ENCODE measurements at regions of chr6 and their contacts with region 1.

Region 1: DNA sequence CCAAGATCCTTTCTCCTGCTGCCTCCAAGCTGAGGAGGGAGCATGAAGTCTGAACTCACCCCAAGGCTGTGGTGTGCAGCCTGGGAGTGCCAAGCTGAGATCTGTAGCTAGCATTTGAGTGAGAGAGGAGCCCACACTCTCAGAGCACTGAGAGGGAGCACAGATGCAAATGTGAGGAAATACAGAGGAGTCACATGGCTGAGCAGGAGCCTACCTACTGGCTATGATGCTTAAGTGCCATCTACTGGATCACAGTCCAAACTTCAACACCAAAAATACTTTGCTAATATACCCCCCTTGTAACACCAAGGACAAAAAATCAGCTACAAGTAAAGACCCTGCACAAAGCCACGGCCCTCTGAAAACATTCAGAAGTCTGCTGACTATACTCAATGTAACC is 94.4 kb upstream of the IMPG1 start:
- DNase-seq: no peak
- ATAC-seq: no peak
- H3K4me3 Mint-ChIP-seq: no peak overlapping the region
- H3K27ac Mint-ChIP-seq: no peak overlapping the region
- H3K4me1 Mint-ChIP-seq: no peaks in the 10 kb centered on the region
- H3K27me3 Mint-ChIP-seq: no peaks in the 10 kb centered on the region
- CTCF ChIP-seq: no peak

Region 2: DNA sequence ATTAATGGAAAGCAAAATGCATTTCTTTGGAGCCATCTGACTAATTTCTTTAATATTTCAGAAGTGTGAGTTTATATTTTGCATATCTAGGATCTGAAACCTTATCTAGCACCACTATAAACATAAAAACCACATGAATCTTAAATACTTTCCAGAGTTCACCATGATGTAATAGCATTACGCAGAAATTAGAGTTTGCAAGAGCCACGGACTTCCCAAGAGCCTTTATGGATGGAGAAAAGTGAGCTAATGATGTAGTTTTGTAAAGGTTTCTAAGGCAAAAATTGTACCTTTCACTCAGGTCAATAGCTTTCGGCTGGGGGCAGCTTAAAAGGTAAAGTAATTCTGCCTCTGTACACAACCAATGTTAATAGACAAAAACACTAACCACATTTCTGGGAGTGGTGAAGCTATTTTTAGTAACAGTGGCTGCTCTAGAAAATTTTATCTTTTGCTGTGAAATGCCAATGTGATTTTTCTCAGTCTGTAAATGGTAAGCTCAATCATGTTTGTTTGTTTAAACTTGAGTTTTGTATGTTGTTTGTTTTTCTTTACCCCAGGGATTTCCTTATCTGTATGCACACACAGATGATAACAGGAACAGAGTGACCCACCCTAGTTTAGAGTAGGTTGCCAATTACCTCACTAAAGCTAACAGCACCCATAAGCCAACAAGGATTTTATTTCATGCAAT is 753.8 kb before region 1 on chr6:
- CTCF ChIA-PET with region 1: no interaction called
- POLR2A ChIA-PET with region 1: no interaction called
- intact Hi-C with region 1: loop called (anchors 5 kb)
- DNase-seq: no peak
- ATAC-seq: no peak
- H3K4me3 Mint-ChIP-seq: no peak overlapping the region
- H3K27ac Mint-ChIP-seq: no peak overlapping the region
- H3K4me1 Mint-ChIP-seq: no peaks in the 10 kb centered on the region
- H3K27me3 Mint-ChIP-seq: peaks cover 7% of the 10 kb centered on the region
- CTCF ChIP-seq: no peak

Region 3: GRCh38 chr6:75748743-75749501 is 418.0 kb before region 1 on chr6 and contains the start of gene MYO6:
- CTCF ChIA-PET with region 1: no interaction called
- POLR2A ChIA-PET with region 1: no interaction called
- intact Hi-C with region 1: no loop called
- DNase-seq: peak; percentile 45
- ATAC-seq: peak; percentile 75
- H3K4me3 Mint-ChIP-seq: peak within 1 kb of the TSS; percentile 85
- H3K27ac Mint-ChIP-seq: no peak within 1 kb of the TSS
- H3K4me1 Mint-ChIP-seq: peaks cover 20% of the 10 kb centered on the region
- H3K27me3 Mint-ChIP-seq: peaks cover 40% of the 10 kb centered on the region
- CTCF ChIP-seq: no peak
- total RNA-seq, gene MYO6: 0.42 and 0.44 TPM in 2 replicates

Region 4: GRCh38 chr6:75963569-75963968 is 203.3 kb before region 1 on chr6:
- CTCF ChIA-PET with region 1: no interaction called
- POLR2A ChIA-PET with region 1: no interaction called
- intact Hi-C with region 1: no loop called
- DNase-seq: no peak
- ATAC-seq: no peak
- H3K4me3 Mint-ChIP-seq: no peak overlapping the region
- H3K27ac Mint-ChIP-seq: no peak overlapping the region
- H3K4me1 Mint-ChIP-seq: no peaks in the 10 kb centered on the region
- H3K27me3 Mint-ChIP-seq: peaks cover 1% of the 10 kb centered on the region
- CTCF ChIP-seq: no peak

Region 5: DNA sequence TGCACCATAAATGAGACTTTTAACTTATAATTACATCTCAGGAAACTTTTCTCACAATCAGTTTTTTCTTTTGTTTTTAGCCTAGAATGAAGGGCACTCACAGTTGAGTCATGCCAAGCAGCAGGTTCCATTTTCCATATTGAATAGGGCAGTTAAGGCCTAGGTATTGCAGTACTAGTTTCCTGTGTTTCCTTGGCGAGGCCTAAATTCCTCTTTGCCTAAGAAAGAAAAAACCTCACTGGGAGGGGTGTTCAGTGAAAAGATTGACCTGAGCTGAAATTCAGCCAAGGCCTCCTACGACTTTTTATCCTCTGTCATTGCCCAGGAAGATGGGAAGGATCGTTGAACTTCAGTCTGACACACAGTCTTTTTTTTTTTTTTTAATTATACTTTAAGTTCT is 179.9 kb before region 1 on chr6:
- CTCF ChIA-PET with region 1: no interaction called
- POLR2A ChIA-PET with region 1: no interaction called
- intact Hi-C with region 1: no loop called
- DNase-seq: no peak
- ATAC-seq: no peak
- H3K4me3 Mint-ChIP-seq: no peak overlapping the region
- H3K27ac Mint-ChIP-seq: no peak overlapping the region
- H3K4me1 Mint-ChIP-seq: no peaks in the 10 kb centered on the region
- H3K27me3 Mint-ChIP-seq: no peaks in the 10 kb centered on the region
- CTCF ChIP-seq: no peak

Measured in activated B cell treated with CpG ODN at 0.5 μM for 24 hours (primary cell).